Naive thymus-derived CD4-positive, alpha-beta T cell (primary cell): ENCODE measurements at regions of chr4 and their contacts with region 1.

Region 1: DNA sequence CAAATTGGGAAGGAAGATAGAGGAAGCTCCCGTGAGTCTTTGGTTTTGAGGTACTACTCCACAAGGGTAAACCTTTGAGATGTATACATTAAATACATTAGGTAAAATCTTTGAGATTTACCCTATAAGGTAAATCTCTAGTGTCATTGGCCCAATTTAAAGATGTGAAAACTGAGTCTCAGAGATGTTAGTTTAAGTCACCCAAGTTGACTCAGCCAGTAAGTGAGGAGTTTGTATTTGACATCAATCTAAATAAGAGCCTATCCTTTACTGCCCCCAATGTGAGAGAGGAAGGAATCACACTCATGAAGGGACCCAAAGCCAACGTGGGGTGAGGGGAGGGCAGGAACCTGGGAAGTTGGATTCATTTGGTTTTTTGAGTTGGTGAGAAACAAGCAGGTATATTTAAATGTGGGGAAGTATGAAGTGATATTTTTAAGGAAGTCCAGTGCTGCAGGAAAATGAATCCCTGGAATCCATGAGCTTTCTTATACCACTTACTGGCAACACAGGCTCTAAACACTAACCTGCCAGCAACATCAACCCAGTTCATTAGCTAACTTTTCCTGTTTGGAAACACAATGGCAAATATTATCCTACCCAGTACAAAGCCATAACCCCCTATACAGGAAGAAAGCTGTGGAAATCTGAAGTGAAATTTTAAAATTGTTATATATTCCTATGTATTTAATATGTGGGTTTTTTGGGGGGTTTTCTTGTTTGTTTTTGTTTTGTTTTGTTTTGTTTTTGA is 55.3 kb downstream of the PALLD start:
- DNase-seq: peak in 6 of 9 donors; percentile 8 to 38 (median 23)
- ATAC-seq: peak; percentile 57
- H3K4me3 ChIP-seq: no peak overlapping the region
- H3K4me3 Mint-ChIP-seq: no peak overlapping the region
- H3K27ac ChIP-seq: no peak overlapping the region
- H3K27ac Mint-ChIP-seq: no peak overlapping the region
- H3K4me1 ChIP-seq: no peaks in the 10 kb centered on the region
- H3K4me1 Mint-ChIP-seq: no peaks in the 10 kb centered on the region
- H3K27me3 ChIP-seq: no peaks in the 10 kb centered on the region
- H3K27me3 Mint-ChIP-seq: peaks cover 0 to 9% (median 4%) of the 10 kb centered on the region in 5 donors

Region 2: DNA sequence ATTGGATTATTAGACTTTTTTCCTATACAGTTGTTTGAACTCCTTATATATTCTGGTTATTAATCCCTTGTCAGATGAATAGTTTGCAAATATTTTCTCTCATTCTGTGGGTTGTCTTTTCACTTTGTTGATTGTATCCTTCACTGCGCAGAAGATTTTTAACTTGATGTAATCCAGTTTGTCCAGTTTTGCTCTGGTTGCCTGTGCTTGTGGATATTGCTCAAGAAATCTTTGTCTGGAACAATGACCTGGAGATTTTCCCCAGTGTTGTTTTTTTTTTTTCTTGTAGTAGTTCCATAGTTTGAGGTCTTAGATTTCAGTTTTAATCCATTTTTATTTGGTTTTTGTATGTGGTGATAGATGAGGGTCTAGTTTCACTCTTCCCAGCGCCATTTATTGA is 1028.0 kb before region 1 on chr4:
- CTCF ChIA-PET with region 1: no interaction called
- POLR2A ChIA-PET with region 1: no interaction called
- intact Hi-C with region 1: no loop called
- DNase-seq: no peak
- ATAC-seq: no peak
- H3K4me3 ChIP-seq: no peak overlapping the region
- H3K4me3 Mint-ChIP-seq: no peak overlapping the region
- H3K27ac ChIP-seq: no peak overlapping the region
- H3K27ac Mint-ChIP-seq: no peak overlapping the region
- H3K4me1 ChIP-seq: no peaks in the 10 kb centered on the region
- H3K4me1 Mint-ChIP-seq: no peaks in the 10 kb centered on the region
- H3K27me3 ChIP-seq: no peaks in the 10 kb centered on the region
- H3K27me3 Mint-ChIP-seq: no peaks in the 10 kb centered on the region

Region 3: GRCh38 chr4:168279556-168279955 is 272.6 kb before region 1 on chr4:
- CTCF ChIA-PET with region 1: no interaction called
- POLR2A ChIA-PET with region 1: no interaction called
- intact Hi-C with region 1: loop called in 1 of 2 experiments (anchors 5 kb)
- DNase-seq: no peak
- ATAC-seq: no peak
- H3K4me3 ChIP-seq: no peak overlapping the region
- H3K4me3 Mint-ChIP-seq: no peak overlapping the region
- H3K27ac ChIP-seq: no peak overlapping the region
- H3K27ac Mint-ChIP-seq: no peak overlapping the region
- H3K4me1 ChIP-seq: no peaks in the 10 kb centered on the region
- H3K4me1 Mint-ChIP-seq: peaks cover 0 to 16% (median 0%) of the 10 kb centered on the region in 7 donors
- H3K27me3 ChIP-seq: no peaks in the 10 kb centered on the region
- H3K27me3 Mint-ChIP-seq: no peaks in the 10 kb centered on the region

Region 4: GRCh38 chr4:168415911-168416310 is 136.2 kb before region 1 on chr4:
- CTCF ChIA-PET with region 1: no interaction called
- POLR2A ChIA-PET with region 1: no interaction called
- intact Hi-C with region 1: loop called in 1 of 2 experiments (anchors 5 kb)
- DNase-seq: no peak
- ATAC-seq: no peak
- H3K4me3 ChIP-seq: no peak overlapping the region
- H3K4me3 Mint-ChIP-seq: no peak overlapping the region
- H3K27ac ChIP-seq: no peak overlapping the region
- H3K27ac Mint-ChIP-seq: no peak overlapping the region
- H3K4me1 ChIP-seq: no peaks in the 10 kb centered on the region
- H3K4me1 Mint-ChIP-seq: peaks cover 0 to 2% (median 0%) of the 10 kb centered on the region in 7 donors
- H3K27me3 ChIP-seq: no peaks in the 10 kb centered on the region
- H3K27me3 Mint-ChIP-seq: no peaks in the 10 kb centered on the region

Region 5: GRCh38 chr4:169215656-169216055 is 663.5 kb after region 1 on chr4:
- CTCF ChIA-PET with region 1: no interaction called
- POLR2A ChIA-PET with region 1: no interaction called
- intact Hi-C with region 1: no loop called
- DNase-seq: no peak
- ATAC-seq: no peak
- H3K4me3 ChIP-seq: no peak overlapping the region
- H3K4me3 Mint-ChIP-seq: no peak overlapping the region
- H3K27ac ChIP-seq: no peak overlapping the region
- H3K27ac Mint-ChIP-seq: no peak overlapping the region
- H3K4me1 ChIP-seq: no peaks in the 10 kb centered on the region
- H3K4me1 Mint-ChIP-seq: no peaks in the 10 kb centered on the region
- H3K27me3 ChIP-seq: no peaks in the 10 kb centered on the region
- H3K27me3 Mint-ChIP-seq: peaks cover 0 to 5% (median 3%) of the 10 kb centered on the region in 5 donors